PC-9 (cell line): ENCODE measurements at regions of chr5 and their contacts with region 1.

Region 1: DNA sequence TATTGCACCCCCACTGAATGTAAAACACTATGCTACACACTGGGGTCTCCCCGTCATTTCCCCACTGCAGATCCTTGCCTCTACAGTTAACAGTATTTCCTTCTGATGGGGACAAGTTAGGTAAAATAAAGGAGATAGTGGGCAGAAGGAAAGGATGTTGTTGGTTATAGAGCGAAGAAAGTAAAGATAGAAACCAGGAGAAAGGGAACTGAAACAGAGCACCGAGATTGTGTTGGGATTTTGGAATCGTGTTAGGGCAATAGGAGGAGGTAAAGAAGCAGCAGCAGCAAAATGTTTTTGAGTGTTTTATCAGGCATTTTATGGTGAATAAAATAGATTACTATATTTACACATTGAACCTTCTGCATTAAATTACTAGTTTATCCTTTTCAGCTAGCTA is 60.0 kb downstream of the PAM start:
- DNase-seq: no peak
- H3K4me3 ChIP-seq: no peak overlapping the region
- H3K27ac ChIP-seq: no peak overlapping the region
- H3K4me1 ChIP-seq: no peaks in the 10 kb centered on the region
- H3K27me3 ChIP-seq: no peaks in the 10 kb centered on the region
- CTCF ChIP-seq: no peak

Region 2: DNA sequence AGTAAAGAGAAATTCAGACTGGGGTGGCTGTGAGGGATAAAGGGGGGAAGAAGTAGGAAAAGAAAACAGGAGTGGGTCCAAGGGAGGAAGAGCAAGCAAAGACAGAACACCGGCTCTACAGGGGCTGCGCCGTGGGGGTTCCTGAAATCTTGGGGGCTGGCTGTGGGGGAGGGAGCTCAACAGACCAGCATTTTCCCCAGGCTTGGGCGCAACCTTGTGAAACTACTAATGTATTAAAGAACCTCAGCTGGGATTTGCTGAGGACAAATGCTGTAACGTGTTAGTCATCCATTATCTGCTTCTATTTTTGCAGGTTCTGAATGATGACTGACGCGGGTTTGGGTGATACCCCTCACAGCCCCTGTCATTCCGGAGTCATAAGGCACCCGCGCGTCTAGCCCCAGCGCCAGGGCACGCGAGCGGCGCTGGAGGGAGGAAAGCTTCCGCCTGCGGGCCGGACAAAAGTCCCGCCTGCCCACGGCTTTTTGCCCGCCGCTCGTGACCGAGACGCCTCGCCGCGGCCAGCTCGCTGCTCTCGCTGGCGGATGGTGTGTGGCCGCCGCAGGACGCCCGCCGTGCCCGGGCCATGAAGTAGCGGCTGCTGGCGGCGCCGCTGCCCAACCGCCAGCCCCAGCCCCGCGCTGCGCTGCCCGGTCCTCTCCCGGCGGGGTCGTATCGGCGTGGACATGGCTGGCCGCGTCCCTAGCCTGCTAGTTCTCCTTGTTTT is 50.6 kb after region 1 on chr5:
- CTCF ChIA-PET with region 1: no interaction called
- POLR2A ChIA-PET with region 1: interaction called, 19 read pairs
- intact Hi-C with region 1: no loop called
- DNase-seq: peak; percentile 43 to 71
- H3K4me3 ChIP-seq: peak overlapping the region; percentile 88
- H3K27ac ChIP-seq: peak overlapping the region; percentile 66
- H3K4me1 ChIP-seq: peaks cover 18% of the 10 kb centered on the region
- H3K27me3 ChIP-seq: no peaks in the 10 kb centered on the region
- CTCF ChIP-seq: no peak